Common myeloid progenitor, CD34-positive (primary cell): ENCODE measurements at regions of chr2 and their contacts with region 1.

Region 1: DNA sequence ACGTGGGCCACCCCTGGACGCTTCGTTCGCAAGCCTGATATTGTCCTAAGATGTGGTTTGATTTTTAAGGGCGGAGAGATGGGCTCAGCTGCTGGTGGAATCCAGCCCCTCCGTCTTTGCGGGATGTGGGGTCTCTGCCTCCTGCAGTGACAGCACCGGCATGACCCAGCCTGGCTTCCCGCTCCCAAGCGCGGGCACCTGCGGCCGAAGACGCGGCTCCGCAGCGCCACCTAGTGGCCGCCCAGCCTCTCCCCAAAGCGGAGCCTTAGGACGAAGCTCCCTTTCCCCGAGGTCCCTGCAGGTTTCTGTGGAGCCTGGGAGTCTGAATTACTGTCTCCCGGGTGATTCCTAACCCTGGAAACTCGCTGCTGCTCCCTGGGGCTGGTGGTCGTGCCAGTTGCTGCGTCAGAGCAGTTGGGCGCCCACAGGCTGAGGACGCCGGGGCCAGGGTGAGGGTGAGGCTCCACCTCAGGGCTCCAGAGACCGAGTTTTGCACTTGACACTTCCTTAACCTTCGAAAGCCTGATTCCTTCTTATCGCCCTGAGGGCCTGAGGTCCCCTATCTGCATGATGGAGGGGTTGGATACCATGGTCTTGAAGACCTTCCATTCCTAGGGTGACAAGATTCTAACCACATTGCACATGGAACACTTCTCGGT is 137.5 kb downstream of the TPO start:
- DNase-seq: peak; percentile 42 to 59 (median 53)
- H3K4me3 ChIP-seq: peak overlapping the region in 3 of 7 experiments; percentile 36 to 48 (median 43)
- H3K27ac ChIP-seq: no peak overlapping the region
- H3K4me1 ChIP-seq: peaks cover 0 to 5% (median 1%) of the 10 kb centered on the region in 4 experiments
- H3K27me3 ChIP-seq: peaks cover 0 to 13% (median 8%) of the 10 kb centered on the region in 5 experiments

Region 2: GRCh38 chr2:854460-854859 is 696.3 kb before region 1 on chr2:
- CTCF ChIA-PET with region 1: interaction called, 12 read pairs
- POLR2A ChIA-PET with region 1: no interaction called
- DNase-seq: peak; percentile 25 to 62 (median 54)
- H3K4me3 ChIP-seq: no peak overlapping the region
- H3K27ac ChIP-seq: no peak overlapping the region
- H3K4me1 ChIP-seq: peaks cover 0 to 7% (median 3%) of the 10 kb centered on the region in 4 experiments
- H3K27me3 ChIP-seq: peaks cover 0 to 2% (median 0%) of the 10 kb centered on the region in 5 experiments

Region 3: DNA sequence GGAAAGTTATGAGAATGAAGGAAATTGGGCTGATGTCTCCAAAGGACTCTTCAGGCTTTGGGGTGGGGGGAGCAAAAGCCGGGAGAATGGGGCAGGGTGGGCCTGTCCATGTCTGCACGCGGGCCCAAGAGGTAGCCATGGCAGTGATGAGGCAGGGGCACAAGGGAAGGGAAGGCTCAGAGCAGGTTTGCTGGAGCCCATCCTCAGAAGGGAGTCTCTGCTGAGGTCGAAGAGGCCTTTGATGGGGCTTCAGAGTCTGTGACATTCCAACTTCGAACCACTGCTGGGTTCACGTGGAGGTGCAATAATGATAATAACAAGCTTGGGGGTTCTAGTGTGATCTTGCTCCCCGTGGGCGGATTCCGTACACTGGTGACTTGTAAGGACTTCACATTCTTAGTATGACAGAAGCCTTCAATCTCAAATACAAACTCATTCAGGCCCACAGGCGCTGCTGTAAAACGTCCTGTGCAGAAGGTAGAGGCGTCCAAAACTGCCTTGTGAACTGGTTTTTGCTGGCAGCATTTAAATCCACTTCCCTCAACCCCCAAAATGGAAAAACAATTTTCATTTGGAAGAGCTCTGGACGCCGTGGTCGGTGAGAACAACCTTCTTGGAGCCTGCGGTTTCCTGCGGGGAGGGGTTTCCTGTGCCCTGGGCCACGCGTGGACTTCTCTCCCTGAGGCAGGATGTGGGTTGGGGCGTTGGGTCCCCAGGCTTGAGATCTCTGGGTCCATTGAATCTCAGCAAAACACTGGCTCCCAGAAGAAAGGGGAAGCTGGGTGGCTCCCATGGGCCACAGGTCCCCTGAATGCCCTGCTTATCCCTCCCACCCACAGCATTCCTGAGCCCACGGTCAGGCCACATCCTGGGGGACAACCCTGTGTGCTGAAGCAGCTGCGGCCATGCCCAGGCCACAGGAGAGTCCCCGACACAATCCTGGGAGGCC is 13.4 kb after region 1 on chr2:
- CTCF ChIA-PET with region 1: interaction called, 25 read pairs
- POLR2A ChIA-PET with region 1: no interaction called
- DNase-seq: peak; percentile 18 to 54 (median 51)
- H3K4me3 ChIP-seq: no peak overlapping the region
- H3K27ac ChIP-seq: no peak overlapping the region
- H3K4me1 ChIP-seq: peaks cover 0 to 15% (median 10%) of the 10 kb centered on the region in 4 experiments
- H3K27me3 ChIP-seq: peaks cover 0 to 13% (median 0%) of the 10 kb centered on the region in 5 experiments